ENCODE measurements at regions of chr5 and their contacts with region 1.

Region 1: DNA sequence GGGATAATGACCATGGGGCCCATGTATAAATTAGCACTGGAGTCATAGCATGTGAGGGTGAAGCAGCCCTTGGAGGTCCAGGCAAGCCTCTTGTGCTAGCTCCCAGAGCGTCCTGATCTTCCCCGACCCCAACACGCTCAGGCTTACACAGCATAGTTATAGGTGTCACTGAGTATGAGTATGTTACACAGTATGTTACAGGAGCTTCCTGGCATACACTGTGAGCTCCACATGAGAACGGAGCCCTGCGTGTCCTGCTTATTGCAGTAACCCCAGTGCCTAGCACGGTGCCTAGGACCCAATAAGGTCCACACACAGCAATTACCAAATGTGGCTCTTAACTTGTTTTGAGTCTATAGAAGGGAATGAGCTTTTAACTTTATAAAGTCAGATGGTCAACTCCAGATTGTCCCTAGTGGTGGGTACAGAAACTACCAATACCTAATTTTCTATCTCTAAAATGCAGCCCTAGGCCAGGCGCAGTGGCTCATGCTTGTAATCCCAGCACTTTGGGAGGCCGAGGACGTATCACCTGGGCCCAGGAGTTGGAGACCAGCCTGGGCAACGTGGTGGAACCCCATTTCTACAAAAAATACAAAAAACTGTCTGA is 64.1 kb downstream of the PLAC8L1 start:
- DNase-seq: no peak
- ATAC-seq: peak; percentile 91
- H3K4me3 ChIP-seq: no peak overlapping the region
- H3K27ac ChIP-seq: no peak overlapping the region
- H3K4me1 ChIP-seq: no peaks in the 10 kb centered on the region
- H3K27me3 ChIP-seq: no peaks in the 10 kb centered on the region
- CTCF ChIP-seq: peak; percentile 42; the same call in 1 of the 2 replicates
- EP300 ChIP-seq: no peak
- POLR2A ChIP-seq: no peak
- RAD21 ChIP-seq: 0 out of 2 replicates have a peak, but pooled peaks have one; percentile 37

Region 2: GRCh38 chr5:145752947-145753346 is 288.3 kb before region 1 on chr5:
- CTCF ChIA-PET with region 1: no interaction called
- POLR2A ChIA-PET with region 1: no interaction called
- in situ Hi-C with region 1: no loop called
- intact Hi-C with region 1: loop called (anchors 1 kb)
- DNase-seq: no peak
- ATAC-seq: no peak
- H3K4me3 ChIP-seq: no peak overlapping the region
- H3K27ac ChIP-seq: no peak overlapping the region
- H3K4me1 ChIP-seq: no peaks in the 10 kb centered on the region
- H3K27me3 ChIP-seq: no peaks in the 10 kb centered on the region
- CTCF ChIP-seq: no peak
- EP300 ChIP-seq: no peak
- POLR2A ChIP-seq: no peak
- RAD21 ChIP-seq: no peak

Region 3: DNA sequence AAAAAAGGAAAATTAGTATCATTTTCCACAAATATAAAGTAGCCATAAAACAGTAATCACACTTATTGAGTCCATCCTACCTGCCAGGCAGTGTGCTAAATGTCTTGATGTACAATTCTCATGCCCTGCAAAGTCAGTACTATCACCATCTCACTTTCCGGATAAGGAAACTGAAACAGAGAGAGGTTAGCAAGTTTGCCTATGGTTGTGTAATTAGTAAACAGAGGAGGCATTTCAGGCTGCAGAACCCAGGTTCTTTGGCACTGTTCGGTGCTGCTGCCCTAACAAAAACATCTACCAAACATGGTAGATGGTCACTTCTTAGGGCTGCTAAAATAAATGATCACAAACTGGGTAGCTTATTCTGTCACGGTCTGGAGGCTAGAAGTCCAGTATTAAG is 41.5 kb after region 1 on chr5:
- CTCF ChIA-PET with region 1: no interaction called
- POLR2A ChIA-PET with region 1: no interaction called
- in situ Hi-C with region 1: no loop called
- intact Hi-C with region 1: no loop called
- DNase-seq: no peak
- ATAC-seq: peak; percentile 52
- H3K4me3 ChIP-seq: no peak overlapping the region
- H3K27ac ChIP-seq: no peak overlapping the region
- H3K4me1 ChIP-seq: peaks cover 9% of the 10 kb centered on the region
- H3K27me3 ChIP-seq: no peaks in the 10 kb centered on the region
- CTCF ChIP-seq: no peak
- EP300 ChIP-seq: no peak
- POLR2A ChIP-seq: no peak
- RAD21 ChIP-seq: no peak